ENCODE measurements at regions of chr2 and their contacts with region 1.

Region 1: DNA sequence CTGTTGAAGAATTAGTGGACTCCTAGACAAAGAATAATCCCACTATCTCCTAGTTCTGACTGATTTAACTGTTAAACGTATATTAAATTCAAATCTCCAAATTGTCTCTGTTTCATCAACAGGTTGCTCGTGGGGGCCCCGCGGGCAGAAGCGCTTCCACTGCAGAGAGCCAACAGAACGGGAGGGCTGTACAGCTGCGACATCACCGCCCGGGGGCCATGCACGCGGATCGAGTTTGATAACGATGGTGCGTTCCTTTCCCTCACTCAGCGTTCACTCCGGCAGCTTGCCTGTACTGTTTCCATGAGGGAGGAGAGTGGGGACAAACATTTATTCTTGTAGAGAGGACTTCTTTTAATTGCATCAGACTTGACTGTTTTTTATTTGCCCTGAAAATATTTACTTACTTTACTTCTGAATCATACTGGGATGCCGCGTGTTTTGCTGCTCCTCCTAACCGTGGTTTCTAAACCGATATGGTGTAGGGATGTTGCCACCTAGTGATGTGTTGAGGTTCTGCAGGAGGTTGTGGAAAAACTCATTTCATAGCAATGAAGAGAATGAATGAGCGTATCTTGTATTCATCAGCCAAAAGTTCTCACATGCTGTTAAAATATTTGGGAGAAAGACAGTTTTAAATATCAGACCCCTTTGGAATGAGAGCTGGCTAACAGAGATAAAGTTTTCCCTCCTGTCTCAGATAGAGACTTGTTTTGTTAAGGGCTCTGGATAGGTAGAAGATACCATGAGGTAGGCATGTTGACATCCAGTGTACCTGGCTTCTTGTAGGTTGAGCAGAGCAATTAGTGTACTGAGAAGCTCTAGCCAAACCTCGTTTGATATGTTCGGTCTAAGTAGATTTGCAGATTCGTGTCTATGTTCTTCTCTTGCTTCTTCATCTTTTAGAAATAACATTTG is 38.3 kb downstream of the ITGA6 start:
- DNase-seq: peak; percentile 79
- ATAC-seq: peak; percentile 85
- H3K4me3 ChIP-seq: peak overlapping the region; percentile 30 to 51
- H3K27ac ChIP-seq: peak overlapping the region; percentile 18
- H3K4me1 ChIP-seq: peaks cover 20% of the 10 kb centered on the region
- H3K27me3 ChIP-seq: no peaks in the 10 kb centered on the region
- CTCF ChIP-seq: peak; percentile 87

Region 2: DNA sequence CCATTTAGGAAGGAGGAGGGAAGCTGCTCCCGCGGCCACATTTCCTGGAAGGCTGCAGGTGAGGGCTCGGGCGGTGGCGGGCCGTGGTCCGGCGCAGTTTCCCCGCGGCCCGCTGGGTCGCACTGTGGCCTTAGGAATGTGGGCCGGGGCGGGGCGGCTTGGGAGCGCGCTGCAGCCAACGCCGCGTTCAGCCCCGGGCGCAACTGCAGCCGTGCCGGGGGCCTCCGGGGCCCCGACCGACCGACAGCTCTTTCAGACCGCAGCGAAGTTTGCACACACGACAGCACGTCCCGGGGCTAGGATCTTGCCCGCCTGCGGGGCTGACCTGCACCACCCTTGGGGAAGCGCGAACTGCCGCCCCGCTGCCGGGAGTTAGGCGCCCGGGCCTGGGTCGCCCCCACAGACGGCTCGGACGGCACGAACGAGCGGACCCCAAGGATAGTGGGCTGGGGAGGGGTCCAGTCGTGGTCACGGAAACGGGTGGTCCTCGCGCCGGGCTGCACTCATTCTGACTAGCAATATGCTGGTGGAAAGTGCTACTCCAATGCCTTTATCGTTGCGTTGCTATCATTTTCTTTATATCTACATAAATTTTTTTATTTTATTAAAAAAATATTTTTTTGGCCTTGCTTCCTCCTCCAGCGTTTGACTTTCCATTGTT is 293.0 kb before region 1 on chr2:
- CTCF ChIA-PET with region 1: interaction called, 24 read pairs
- POLR2A ChIA-PET with region 1: no interaction called
- in situ Hi-C with region 1: no loop called
- intact Hi-C with region 1: loop called (anchors 1 kb)
- DNase-seq: no peak
- ATAC-seq: peak; percentile 100
- H3K4me3 ChIP-seq: peak overlapping the region; percentile 57 to 73
- H3K27ac ChIP-seq: no peak overlapping the region
- H3K4me1 ChIP-seq: peaks cover 2% of the 10 kb centered on the region; the same call in 1 of the 2 replicates
- H3K27me3 ChIP-seq: no peaks in the 10 kb centered on the region
- CTCF ChIP-seq: peak; percentile 94

Region 3: DNA sequence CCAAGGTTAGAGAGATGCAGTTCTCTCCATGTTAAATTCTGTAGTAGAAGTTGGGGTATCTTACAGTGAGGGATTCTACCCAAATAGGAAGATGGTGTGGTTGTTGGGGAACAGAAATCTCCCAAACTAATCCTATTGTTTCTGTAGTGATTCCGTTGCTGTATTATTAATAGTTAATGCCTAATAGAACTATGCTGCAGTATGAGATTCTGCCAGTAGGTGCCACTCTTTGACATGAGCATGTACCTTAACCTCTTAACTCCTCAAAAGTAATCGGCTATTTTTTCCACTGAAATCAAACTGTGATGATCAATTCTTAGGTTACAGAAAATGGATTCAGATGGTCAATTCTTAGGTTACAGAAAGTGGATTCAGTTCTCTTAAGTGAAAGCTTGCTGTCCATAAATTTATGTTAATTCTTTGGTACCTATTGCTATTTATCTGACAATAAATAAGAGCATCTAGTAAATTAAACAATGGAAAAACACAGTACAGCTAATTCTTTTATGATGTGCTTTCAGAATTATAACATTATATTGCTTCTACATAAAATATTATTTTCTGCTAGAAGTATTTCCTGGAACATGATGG is 265.1 kb before region 1 on chr2:
- CTCF ChIA-PET with region 1: interaction called, 4 read pairs
- POLR2A ChIA-PET with region 1: no interaction called
- in situ Hi-C with region 1: no loop called
- intact Hi-C with region 1: loop called (anchors 10 kb)
- DNase-seq: peak; percentile 13
- ATAC-seq: no peak
- H3K4me3 ChIP-seq: no peak overlapping the region
- H3K27ac ChIP-seq: no peak overlapping the region
- H3K4me1 ChIP-seq: no peaks in the 10 kb centered on the region
- H3K27me3 ChIP-seq: no peaks in the 10 kb centered on the region
- CTCF ChIP-seq: peak; percentile 61; the same call in 1 of the 2 replicates

Region 4: GRCh38 chr2:172226244-172227061 is 239.2 kb before region 1 on chr2:
- CTCF ChIA-PET with region 1: interaction called, 11 read pairs
- POLR2A ChIA-PET with region 1: no interaction called
- in situ Hi-C with region 1: no loop called
- intact Hi-C with region 1: no loop called
- DNase-seq: no peak
- ATAC-seq: peak; percentile 83
- H3K4me3 ChIP-seq: no peak overlapping the region
- H3K27ac ChIP-seq: no peak overlapping the region
- H3K4me1 ChIP-seq: no peaks in the 10 kb centered on the region
- H3K27me3 ChIP-seq: no peaks in the 10 kb centered on the region
- CTCF ChIP-seq: peak; percentile 73

Region 5: DNA sequence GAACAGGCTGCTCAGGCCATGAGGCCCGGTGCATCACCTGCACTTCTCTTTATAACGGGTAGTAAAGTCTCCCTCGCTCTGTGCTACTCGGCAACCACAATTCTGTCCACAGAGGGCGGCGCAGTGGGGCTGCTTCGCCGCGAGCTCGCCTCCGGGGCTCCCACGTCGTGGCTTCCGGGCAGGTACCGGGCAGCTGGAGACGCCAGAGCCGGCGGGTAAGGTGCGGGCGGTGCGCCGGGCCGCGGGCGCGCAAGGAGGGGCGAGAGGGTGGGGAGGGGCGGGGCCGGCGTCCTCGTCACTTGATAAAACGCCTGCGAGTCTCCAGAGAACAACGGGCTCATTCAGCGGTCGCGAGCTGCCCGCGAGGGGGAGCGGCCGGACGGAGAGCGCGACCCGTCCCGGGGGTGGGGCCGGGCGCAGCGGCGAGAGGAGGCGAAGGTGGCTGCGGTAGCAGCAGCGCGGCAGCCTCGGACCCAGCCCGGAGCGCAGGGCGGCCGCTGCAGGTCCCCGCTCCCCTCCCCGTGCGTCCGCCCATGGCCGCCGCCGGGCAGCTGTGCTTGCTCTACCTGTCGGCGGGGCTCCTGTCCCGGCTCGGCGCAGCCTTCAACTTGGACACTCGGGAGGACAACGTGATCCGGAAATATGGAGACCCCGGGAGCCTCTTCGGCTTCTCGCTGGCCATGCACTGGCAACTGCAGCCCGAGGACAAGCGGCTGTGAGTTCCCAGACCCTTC is 38.3 kb before region 1 on chr2 and contains the start of gene ITGA6:
- CTCF ChIA-PET with region 1: interaction called, 24 read pairs
- POLR2A ChIA-PET with region 1: no interaction called
- in situ Hi-C with region 1: no loop called
- intact Hi-C with region 1: loop called (anchors 1 kb)
- DNase-seq: no peak
- ATAC-seq: peak; percentile 93
- H3K4me3 ChIP-seq: peak within 1 kb of the TSS; percentile 79 to 84
- H3K27ac ChIP-seq: peak within 1 kb of the TSS; percentile 74
- H3K4me1 ChIP-seq: peaks cover 22% of the 10 kb centered on the region
- H3K27me3 ChIP-seq: no peaks in the 10 kb centered on the region
- CTCF ChIP-seq: peak; percentile 17
- total RNA-seq, gene ITGA6: 75.9 TPM

Region 6: GRCh38 chr2:172596776-172597175 is 131.1 kb after region 1 on chr2:
- CTCF ChIA-PET with region 1: no interaction called
- POLR2A ChIA-PET with region 1: no interaction called
- in situ Hi-C with region 1: no loop called
- intact Hi-C with region 1: no loop called
- DNase-seq: no peak
- ATAC-seq: no peak
- H3K4me3 ChIP-seq: no peak overlapping the region
- H3K27ac ChIP-seq: no peak overlapping the region
- H3K4me1 ChIP-seq: no peaks in the 10 kb centered on the region
- H3K27me3 ChIP-seq: no peaks in the 10 kb centered on the region
- CTCF ChIP-seq: no peak